Naive thymus-derived CD4-positive, alpha-beta T cell (primary cell): ENCODE measurements at regions of chr18 and their contacts with region 1.

Region 1: DNA sequence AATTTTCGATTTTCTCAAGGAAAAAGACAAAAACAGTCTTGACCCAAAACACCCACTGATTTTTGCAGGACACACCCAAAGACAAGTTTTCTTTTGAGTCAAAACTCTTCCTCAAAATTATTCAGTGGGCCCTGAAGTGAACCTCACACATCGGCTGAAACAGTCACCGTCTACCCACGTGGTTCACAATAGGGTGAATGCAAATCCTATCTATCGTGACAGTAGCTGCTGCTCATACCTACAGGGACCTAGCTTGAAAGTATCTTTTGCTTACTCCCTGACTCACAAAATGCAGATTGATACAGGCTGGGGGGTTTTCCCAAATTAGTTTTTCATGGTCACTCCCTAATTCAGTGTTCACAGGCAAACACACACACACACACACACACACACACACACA is 10.7 kb upstream of the CD226 start:
- DNase-seq: no peak
- ATAC-seq: peak; percentile 13
- H3K4me3 ChIP-seq: no peak overlapping the region
- H3K4me3 Mint-ChIP-seq: peak overlapping the region in 1 of 10 donors; percentile 32
- H3K27ac ChIP-seq: peak overlapping the region; percentile 26
- H3K27ac Mint-ChIP-seq: no peak overlapping the region
- H3K4me1 ChIP-seq: peaks cover 17 to 41% of the 10 kb centered on the region in 2 donors
- H3K4me1 Mint-ChIP-seq: peaks cover 2 to 26% (median 17%) of the 10 kb centered on the region in 7 donors
- H3K27me3 ChIP-seq: no peaks in the 10 kb centered on the region
- H3K27me3 Mint-ChIP-seq: no peaks in the 10 kb centered on the region

Region 2: DNA sequence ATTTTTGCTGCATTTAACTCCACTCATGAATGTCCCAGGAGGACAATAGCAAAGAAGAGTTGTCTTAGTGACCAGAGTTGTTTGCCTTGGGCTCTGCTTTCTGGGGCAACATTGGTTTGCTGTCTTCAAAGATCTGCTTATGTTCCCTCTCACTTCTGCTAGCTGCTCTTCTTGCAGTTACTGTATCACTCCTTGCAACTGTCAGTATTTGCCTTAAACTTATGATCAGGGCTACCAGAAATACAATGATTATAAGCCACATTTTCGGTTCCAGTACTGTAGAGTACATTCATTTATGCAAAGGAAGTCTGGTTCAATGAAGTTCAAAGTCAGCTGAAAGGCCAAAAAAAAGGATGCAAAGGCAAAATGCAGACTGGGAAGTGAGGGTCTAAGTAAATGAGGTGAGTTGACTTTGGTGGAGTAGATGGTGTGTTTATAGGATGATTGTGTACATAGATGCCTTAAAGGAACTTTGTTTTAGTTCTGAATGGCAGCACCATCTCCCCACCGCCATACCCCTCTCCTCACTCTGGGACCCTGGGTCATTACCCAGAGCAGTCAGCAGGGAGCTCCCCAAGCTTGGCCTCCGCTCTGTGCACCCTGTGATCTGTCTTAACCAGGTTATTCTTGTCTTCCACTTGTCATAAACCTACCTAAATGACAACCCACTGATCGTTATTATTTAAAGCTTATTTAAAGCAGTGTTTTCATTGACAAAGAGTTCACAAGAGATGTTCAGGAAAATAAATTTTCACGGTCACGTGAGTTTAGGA is 321.7 kb before region 1 on chr18:
- CTCF ChIA-PET with region 1: no interaction called
- POLR2A ChIA-PET with region 1: no interaction called
- intact Hi-C with region 1: loop called in 1 of 2 experiments (anchors 1 kb)
- DNase-seq: peak in 6 of 9 donors; percentile 16 to 38 (median 24)
- ATAC-seq: peak; percentile 61
- H3K4me3 ChIP-seq: no peak overlapping the region
- H3K4me3 Mint-ChIP-seq: no peak overlapping the region
- H3K27ac ChIP-seq: no peak overlapping the region
- H3K27ac Mint-ChIP-seq: peak overlapping the region in 1 of 9 donors; percentile 12
- H3K4me1 ChIP-seq: no peaks in the 10 kb centered on the region
- H3K4me1 Mint-ChIP-seq: no peaks in the 10 kb centered on the region
- H3K27me3 ChIP-seq: no peaks in the 10 kb centered on the region
- H3K27me3 Mint-ChIP-seq: peaks cover 0 to 5% (median 0%) of the 10 kb centered on the region in 5 donors

Region 3: GRCh38 chr18:69865776-69866175 is 92.6 kb before region 1 on chr18:
- CTCF ChIA-PET with region 1: no interaction called
- POLR2A ChIA-PET with region 1: no interaction called
- intact Hi-C with region 1: loop called in 1 of 2 experiments (anchors 1 kb)
- DNase-seq: no peak
- ATAC-seq: no peak
- H3K4me3 ChIP-seq: no peak overlapping the region
- H3K4me3 Mint-ChIP-seq: no peak overlapping the region
- H3K27ac ChIP-seq: no peak overlapping the region
- H3K27ac Mint-ChIP-seq: peak overlapping the region in 1 of 9 donors; percentile 9
- H3K4me1 ChIP-seq: no peaks in the 10 kb centered on the region
- H3K4me1 Mint-ChIP-seq: peaks cover 0 to 10% (median 2%) of the 10 kb centered on the region in 7 donors
- H3K27me3 ChIP-seq: no peaks in the 10 kb centered on the region
- H3K27me3 Mint-ChIP-seq: no peaks in the 10 kb centered on the region

Region 4: GRCh38 chr18:69898241-69898861 is 60.1 kb before region 1 on chr18:
- CTCF ChIA-PET with region 1: interaction called, 5 read pairs
- POLR2A ChIA-PET with region 1: interaction called, 16 read pairs
- intact Hi-C with region 1: loop called (anchors 1 kb)
- DNase-seq: peak in 6 of 9 donors; percentile 13 to 37 (median 20)
- ATAC-seq: peak; percentile 38
- H3K4me3 ChIP-seq: peak overlapping the region; percentile 52
- H3K4me3 Mint-ChIP-seq: peak overlapping the region; percentile 68 to 93 (median 84)
- H3K27ac ChIP-seq: peak overlapping the region; percentile 38
- H3K27ac Mint-ChIP-seq: peak overlapping the region; percentile 69 to 97 (median 90)
- H3K4me1 ChIP-seq: peaks cover 22 to 38% of the 10 kb centered on the region in 2 donors
- H3K4me1 Mint-ChIP-seq: peaks cover 49 to 76% (median 68%) of the 10 kb centered on the region in 7 donors
- H3K27me3 ChIP-seq: no peaks in the 10 kb centered on the region
- H3K27me3 Mint-ChIP-seq: no peaks in the 10 kb centered on the region

Region 5: GRCh38 chr18:69943021-69943420 is 15.4 kb before region 1 on chr18:
- CTCF ChIA-PET with region 1: interaction called, 8 read pairs
- POLR2A ChIA-PET with region 1: interaction called, 45 read pairs
- intact Hi-C with region 1: loop called (anchors 1 kb)
- DNase-seq: no peak
- ATAC-seq: no peak
- H3K4me3 ChIP-seq: peak overlapping the region; percentile 12
- H3K4me3 Mint-ChIP-seq: peak overlapping the region in 7 of 10 donors; percentile 40 to 73 (median 61)
- H3K27ac ChIP-seq: no peak overlapping the region
- H3K27ac Mint-ChIP-seq: peak overlapping the region in 6 of 9 donors; percentile 21 to 87 (median 71)
- H3K4me1 ChIP-seq: peaks cover 37 to 56% of the 10 kb centered on the region in 2 donors
- H3K4me1 Mint-ChIP-seq: peaks cover 0 to 77% (median 61%) of the 10 kb centered on the region in 7 donors
- H3K27me3 ChIP-seq: no peaks in the 10 kb centered on the region
- H3K27me3 Mint-ChIP-seq: no peaks in the 10 kb centered on the region

Region 6: DNA sequence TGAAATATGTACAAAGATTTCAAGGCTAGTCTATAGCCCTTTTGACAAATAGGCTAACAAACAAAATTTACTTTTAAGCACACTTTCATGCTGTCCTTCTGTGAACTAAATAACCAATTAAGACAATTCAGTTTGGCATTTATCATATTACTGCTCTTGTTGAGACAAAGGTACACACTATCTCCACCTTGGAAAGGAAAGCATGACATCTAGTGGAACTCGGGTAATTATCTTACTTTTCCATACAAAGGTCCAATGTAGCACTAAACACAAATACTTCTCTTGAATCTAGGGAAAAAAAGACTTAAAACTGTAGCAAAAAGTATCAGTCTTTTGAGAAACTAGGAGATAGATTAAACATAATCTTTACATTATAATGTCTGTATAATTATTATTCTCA is 114.3 kb after region 1 on chr18:
- CTCF ChIA-PET with region 1: no interaction called
- POLR2A ChIA-PET with region 1: no interaction called
- intact Hi-C with region 1: loop called in 1 of 2 experiments (anchors 5 kb)
- DNase-seq: peak in 3 of 9 donors; percentile 3 to 35 (median 3)
- ATAC-seq: no peak
- H3K4me3 ChIP-seq: no peak overlapping the region
- H3K4me3 Mint-ChIP-seq: no peak overlapping the region
- H3K27ac ChIP-seq: no peak overlapping the region
- H3K27ac Mint-ChIP-seq: no peak overlapping the region
- H3K4me1 ChIP-seq: no peaks in the 10 kb centered on the region
- H3K4me1 Mint-ChIP-seq: peaks cover 0 to 6% (median 4%) of the 10 kb centered on the region in 7 donors
- H3K27me3 ChIP-seq: no peaks in the 10 kb centered on the region
- H3K27me3 Mint-ChIP-seq: no peaks in the 10 kb centered on the region